A673 (cell line): ENCODE measurements at regions of chr3 and their contacts with region 1.

Region 1: DNA sequence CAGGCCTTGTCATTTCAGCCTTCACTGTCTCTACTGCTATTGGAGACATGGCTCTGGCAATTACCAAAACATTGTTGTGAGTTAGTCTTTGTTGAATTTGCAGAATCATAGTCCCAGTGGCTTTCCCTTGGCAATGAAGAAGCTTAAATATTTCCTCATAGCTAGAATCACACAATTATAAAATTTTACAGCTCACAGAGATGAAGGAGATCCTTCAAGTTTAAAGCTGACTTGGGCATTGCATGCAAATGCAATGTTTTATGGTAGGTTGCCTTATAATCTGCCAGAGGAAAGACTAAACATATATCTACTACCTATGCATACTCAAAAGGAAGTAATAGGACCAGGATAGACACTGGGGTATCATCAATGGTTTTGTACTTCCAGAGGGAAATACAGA is 90.9 kb downstream of the LSAMP start:
- DNase-seq: no peak
- H3K4me3 ChIP-seq: no peak overlapping the region
- H3K27ac ChIP-seq: no peak overlapping the region
- H3K4me1 ChIP-seq: no peaks in the 10 kb centered on the region
- H3K27me3 ChIP-seq: no peaks in the 10 kb centered on the region
- CTCF ChIP-seq: no peak

Region 2: GRCh38 chr3:116339441-116340028 is 14.8 kb before region 1 on chr3:
- CTCF ChIA-PET with region 1: no interaction called
- POLR2A ChIA-PET with region 1: no interaction called
- intact Hi-C with region 1: no loop called
- DNase-seq: peak; percentile 65
- H3K4me3 ChIP-seq: no peak overlapping the region
- H3K27ac ChIP-seq: peak overlapping the region; percentile 14
- H3K4me1 ChIP-seq: peaks cover 26% of the 10 kb centered on the region
- H3K27me3 ChIP-seq: no peaks in the 10 kb centered on the region
- CTCF ChIP-seq: no peak

Region 3: GRCh38 chr3:116367761-116368395 is 13.5 kb after region 1 on chr3:
- CTCF ChIA-PET with region 1: no interaction called
- POLR2A ChIA-PET with region 1: no interaction called
- intact Hi-C with region 1: loop called (anchors 2 kb)
- DNase-seq: no peak
- H3K4me3 ChIP-seq: no peak overlapping the region
- H3K27ac ChIP-seq: no peak overlapping the region
- H3K4me1 ChIP-seq: no peaks in the 10 kb centered on the region
- H3K27me3 ChIP-seq: no peaks in the 10 kb centered on the region
- CTCF ChIP-seq: no peak